Activated CD4-positive, alpha-beta memory T cell treated with anti-CD3 and anti-CD28 coated beads for 36 hours (primary cell): ENCODE measurements at regions of chr1 and their contacts with region 1.

Region 1: GRCh38 chr1:184075055-184076029 is 23.8 kb downstream of the TSEN15 start:
- DNase-seq: no peak
- H3K4me3 Mint-ChIP-seq: no peak overlapping the region
- H3K27ac Mint-ChIP-seq: no peak overlapping the region
- H3K4me1 Mint-ChIP-seq: peaks cover 11% of the 10 kb centered on the region
- H3K27me3 Mint-ChIP-seq: no peaks in the 10 kb centered on the region

Region 2: DNA sequence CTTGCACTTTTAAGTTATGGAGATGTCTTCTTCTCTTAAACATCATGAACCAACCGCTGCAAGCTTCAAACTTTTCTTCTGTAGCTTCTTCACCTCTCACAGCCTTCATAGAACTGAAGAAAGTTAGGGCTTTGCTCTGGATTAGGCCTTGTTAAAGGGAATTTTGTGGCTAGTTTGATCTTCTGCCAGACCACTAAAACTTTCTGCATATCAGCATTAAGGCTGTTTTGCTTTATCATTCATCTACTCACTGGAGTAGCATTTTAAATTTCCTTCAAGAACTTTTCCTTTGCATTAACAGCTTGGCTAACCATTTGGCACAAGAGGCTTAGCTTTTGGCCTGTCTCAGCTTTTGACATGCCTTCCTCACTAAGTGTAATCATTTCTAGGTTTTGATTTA is 313.5 kb before region 1 on chr1:
- CTCF ChIA-PET with region 1: no interaction called
- POLR2A ChIA-PET with region 1: no interaction called
- intact Hi-C with region 1: no loop called
- DNase-seq: no peak
- H3K4me3 Mint-ChIP-seq: no peak overlapping the region
- H3K27ac Mint-ChIP-seq: no peak overlapping the region
- H3K4me1 Mint-ChIP-seq: no peaks in the 10 kb centered on the region
- H3K27me3 Mint-ChIP-seq: no peaks in the 10 kb centered on the region

Region 3: GRCh38 chr1:184222652-184223052 is 147.3 kb after region 1 on chr1:
- CTCF ChIA-PET with region 1: interaction called, 30 read pairs
- POLR2A ChIA-PET with region 1: no interaction called
- intact Hi-C with region 1: loop called (anchors 1 kb)
- DNase-seq: peak; percentile 47
- H3K4me3 Mint-ChIP-seq: no peak overlapping the region
- H3K27ac Mint-ChIP-seq: no peak overlapping the region
- H3K4me1 Mint-ChIP-seq: no peaks in the 10 kb centered on the region
- H3K27me3 Mint-ChIP-seq: no peaks in the 10 kb centered on the region

Region 4: DNA sequence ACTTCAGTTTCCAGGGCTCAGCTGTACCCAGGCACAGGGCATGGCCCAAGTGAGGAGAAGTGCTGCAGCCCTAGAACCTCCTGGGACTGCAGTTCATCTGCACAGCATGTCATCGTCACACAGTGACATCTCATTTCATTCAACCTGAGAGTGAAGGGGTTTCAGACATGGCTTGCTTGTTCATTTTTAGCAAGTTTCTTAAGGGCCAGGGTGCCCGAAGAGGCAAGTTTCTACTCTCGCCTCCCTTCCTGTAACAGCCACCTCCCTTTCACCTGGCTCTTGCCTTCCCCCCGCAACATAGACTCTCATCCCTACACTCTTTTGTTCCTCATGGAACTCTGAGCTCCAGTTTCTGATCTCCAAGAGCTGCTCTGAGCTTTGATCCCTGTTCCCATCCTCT is 419.6 kb after region 1 on chr1:
- CTCF ChIA-PET with region 1: no interaction called
- POLR2A ChIA-PET with region 1: no interaction called
- intact Hi-C with region 1: loop called (anchors 10 kb)
- DNase-seq: no peak
- H3K4me3 Mint-ChIP-seq: no peak overlapping the region
- H3K27ac Mint-ChIP-seq: no peak overlapping the region
- H3K4me1 Mint-ChIP-seq: peaks cover 11% of the 10 kb centered on the region
- H3K27me3 Mint-ChIP-seq: no peaks in the 10 kb centered on the region